T-cell (primary cell): ENCODE measurements at regions of chr17 and their contacts with region 1.

Region 1: DNA sequence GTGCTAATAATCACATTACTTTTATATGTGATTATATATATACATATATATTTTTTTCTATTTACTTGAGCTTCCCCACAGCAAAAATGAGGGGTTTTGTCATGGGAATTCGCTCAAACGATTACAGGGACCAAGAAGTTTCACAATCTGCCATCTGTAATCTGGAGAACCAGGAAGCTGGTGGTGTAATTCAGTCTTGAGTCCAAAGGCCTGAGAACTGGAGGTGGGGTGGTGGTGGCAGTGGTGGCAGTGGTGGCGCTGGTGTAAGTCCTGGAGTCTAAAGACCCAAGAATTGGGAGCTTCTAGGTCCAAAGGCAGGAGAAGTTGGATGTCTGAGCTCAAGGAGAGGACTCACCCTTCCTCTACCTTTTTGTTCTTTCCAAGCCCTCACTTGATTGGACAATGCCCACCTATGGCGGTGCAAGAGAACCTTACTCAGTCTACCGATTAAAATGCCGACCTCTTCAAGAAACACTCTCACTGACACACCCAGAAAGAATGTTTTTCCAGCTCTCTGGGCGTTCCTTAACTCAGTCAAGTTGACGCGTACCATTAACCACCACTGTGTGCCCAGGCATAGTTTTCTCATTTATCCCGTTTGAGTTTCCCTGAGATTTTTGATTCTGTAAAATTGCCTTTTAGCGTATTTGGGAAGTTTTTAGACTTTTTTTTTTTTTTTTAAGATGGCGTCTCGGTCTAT is 31.9 kb downstream of the POLR2A start:
- DNase-seq: no peak
- ATAC-seq: no peak
- H3K4me3 ChIP-seq: no peak overlapping the region
- H3K4me3 Mint-ChIP-seq: no peak overlapping the region
- H3K27ac ChIP-seq: no peak overlapping the region
- H3K27ac Mint-ChIP-seq: no peak overlapping the region
- H3K4me1 ChIP-seq: no peaks in the 10 kb centered on the region
- H3K4me1 Mint-ChIP-seq: peaks cover 0 to 5% (median 2%) of the 10 kb centered on the region in 3 donors
- H3K27me3 ChIP-seq: no peaks in the 10 kb centered on the region
- H3K27me3 Mint-ChIP-seq: no peaks in the 10 kb centered on the region

Region 2: GRCh38 chr17:6648181-6648580 is 867.9 kb before region 1 on chr17:
- CTCF ChIA-PET with region 1: no interaction called
- POLR2A ChIA-PET with region 1: no interaction called
- DNase-seq: peak in 1 of 35 experiments; percentile 31
- ATAC-seq: no peak
- H3K4me3 ChIP-seq: no peak overlapping the region
- H3K4me3 Mint-ChIP-seq: no peak overlapping the region
- H3K27ac ChIP-seq: no peak overlapping the region
- H3K27ac Mint-ChIP-seq: no peak overlapping the region
- H3K4me1 ChIP-seq: peaks cover 13 to 19% of the 10 kb centered on the region in 2 experiments
- H3K4me1 Mint-ChIP-seq: peaks cover 69 to 79% (median 75%) of the 10 kb centered on the region in 3 donors
- H3K27me3 ChIP-seq: no peaks in the 10 kb centered on the region
- H3K27me3 Mint-ChIP-seq: no peaks in the 10 kb centered on the region

Region 3: GRCh38 chr17:7403977-7404736 is 111.9 kb before region 1 on chr17 and contains the start of gene TMEM256:
- CTCF ChIA-PET with region 1: no interaction called
- POLR2A ChIA-PET with region 1: interaction called in 1 of 2 experiments, 11 read pairs
- DNase-seq: peak; percentile 87 to 98 (median 94)
- ATAC-seq: peak; percentile 86 to 91 (median 90)
- H3K4me3 ChIP-seq: peak within 1 kb of the TSS; percentile 92 to 93
- H3K4me3 Mint-ChIP-seq: peak within 1 kb of the TSS; percentile 90 to 95 (median 94)
- H3K27ac ChIP-seq: peak within 1 kb of the TSS; percentile 84
- H3K27ac Mint-ChIP-seq: peak within 1 kb of the TSS; percentile 87 to 96
- H3K4me1 ChIP-seq: peaks cover 2 to 32% of the 10 kb centered on the region in 2 experiments
- H3K4me1 Mint-ChIP-seq: peaks cover 13 to 24% (median 15%) of the 10 kb centered on the region in 3 donors
- H3K27me3 ChIP-seq: peaks cover 0 to 8% of the 10 kb centered on the region in 2 experiments
- H3K27me3 Mint-ChIP-seq: peaks cover 0 to 1% of the 10 kb centered on the region in 2 donors
- total RNA-seq, gene TMEM256: 28.7 to 48.9 (median 45.6) TPM

Region 4: DNA sequence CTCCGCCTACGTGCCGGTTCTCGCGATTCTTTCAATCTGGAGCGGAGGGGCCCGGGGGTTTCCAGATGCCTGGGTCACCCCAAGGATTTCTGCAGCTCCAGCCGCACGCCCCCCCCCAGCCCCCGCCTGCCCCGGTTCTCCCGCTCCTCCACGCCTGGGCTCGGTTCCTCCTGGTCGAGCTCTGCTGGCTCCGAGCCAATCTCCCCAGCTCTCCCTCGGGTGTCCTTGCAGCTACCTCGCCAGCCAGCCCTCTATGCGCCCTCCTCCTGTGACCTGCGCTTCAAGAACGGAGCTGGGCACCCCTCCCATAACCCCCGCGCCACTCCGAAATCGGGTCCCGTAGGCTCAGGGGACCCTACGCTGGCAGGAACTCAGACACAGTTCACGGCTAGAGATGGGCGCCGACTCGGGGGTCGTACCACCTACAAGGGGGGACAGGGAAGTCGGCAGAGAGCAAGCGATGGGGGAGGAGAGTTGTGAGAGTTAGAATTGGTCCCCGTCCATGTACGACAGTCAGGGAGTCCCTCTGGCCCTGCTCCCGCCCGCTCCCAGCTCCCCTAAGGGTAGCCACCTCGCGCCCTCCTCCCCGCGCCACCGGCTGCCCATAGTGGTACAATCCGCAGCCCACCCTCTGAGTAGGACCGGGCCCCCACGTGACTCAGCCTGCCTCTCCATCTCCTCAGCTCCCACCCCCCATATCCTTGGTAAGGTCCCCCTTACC is 75.8 kb before region 1 on chr17:
- CTCF ChIA-PET with region 1: interaction called in 1 of 2 experiments, 10 read pairs
- POLR2A ChIA-PET with region 1: interaction called in 1 of 2 experiments, 8 read pairs
- DNase-seq: peak in 10 of 35 experiments; percentile 12 to 49 (median 22)
- ATAC-seq: no peak
- H3K4me3 ChIP-seq: peak overlapping the region; percentile 31 to 57
- H3K4me3 Mint-ChIP-seq: peak overlapping the region; percentile 65 to 89 (median 75)
- H3K27ac ChIP-seq: no peak overlapping the region
- H3K27ac Mint-ChIP-seq: peak overlapping the region in 1 of 2 donors; percentile 55
- H3K4me1 ChIP-seq: peaks cover 13 to 61% of the 10 kb centered on the region in 2 experiments
- H3K4me1 Mint-ChIP-seq: peaks cover 45 to 51% (median 47%) of the 10 kb centered on the region in 3 donors
- H3K27me3 ChIP-seq: peaks cover 0 to 77% of the 10 kb centered on the region in 2 experiments
- H3K27me3 Mint-ChIP-seq: peaks cover 32 to 58% of the 10 kb centered on the region in 2 donors

Region 5: DNA sequence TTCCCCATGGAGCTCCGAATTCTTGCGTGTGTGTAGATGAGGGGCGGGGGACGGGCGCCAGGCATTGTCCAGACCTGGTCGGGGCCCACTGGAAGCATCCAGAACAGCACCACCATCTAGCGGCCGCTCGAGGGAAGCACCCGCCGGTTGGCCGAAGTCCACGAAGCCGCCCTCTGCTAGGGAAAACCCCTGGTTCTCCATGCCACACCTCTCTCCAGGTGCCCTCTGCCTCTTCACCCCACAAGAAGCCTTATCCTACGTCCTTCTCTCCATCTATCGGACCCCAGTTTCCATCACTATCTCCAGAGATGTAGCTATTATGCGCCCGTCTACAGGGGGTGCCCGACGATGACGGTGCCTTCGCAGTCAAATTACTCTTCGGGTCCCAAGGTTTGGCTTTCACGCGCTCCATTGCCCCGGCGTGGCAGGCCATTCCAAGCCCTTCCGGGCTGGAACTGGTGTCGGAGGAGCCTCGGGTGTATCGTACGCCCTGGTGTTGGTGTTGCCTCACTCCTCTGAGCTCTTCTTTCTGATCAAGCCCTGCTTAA is 45.0 kb after region 1 on chr17:
- CTCF ChIA-PET with region 1: interaction called, 19 to 22 read pairs
- POLR2A ChIA-PET with region 1: no interaction called
- DNase-seq: peak; percentile 48 to 87 (median 71)
- ATAC-seq: peak; percentile 62 to 72 (median 69)
- H3K4me3 ChIP-seq: peak overlapping the region; percentile 73 to 83
- H3K4me3 Mint-ChIP-seq: peak overlapping the region; percentile 87 to 92 (median 92)
- H3K27ac ChIP-seq: peak overlapping the region; percentile 91
- H3K27ac Mint-ChIP-seq: peak overlapping the region; percentile 85 to 95
- H3K4me1 ChIP-seq: peaks cover 12 to 51% of the 10 kb centered on the region in 2 experiments
- H3K4me1 Mint-ChIP-seq: peaks cover 33 to 53% (median 52%) of the 10 kb centered on the region in 3 donors
- H3K27me3 ChIP-seq: no peaks in the 10 kb centered on the region
- H3K27me3 Mint-ChIP-seq: no peaks in the 10 kb centered on the region